ENCODE measurements at regions of chr2 and their contacts with region 1.

Region 1: GRCh38 chr2:25673300-25674076 is at the start of gene DTNB:
- DNase-seq: peak; percentile 73
- H3K4me3 Mint-ChIP-seq: peak within 1 kb of the TSS; percentile 81
- H3K27ac Mint-ChIP-seq: peak within 1 kb of the TSS; percentile 68
- H3K4me1 Mint-ChIP-seq: peaks cover 34% of the 10 kb centered on the region
- H3K27me3 Mint-ChIP-seq: peaks cover 18% of the 10 kb centered on the region
- total RNA-seq, gene DTNB: 32.1 and 33.9 TPM in 2 replicates

Region 2: DNA sequence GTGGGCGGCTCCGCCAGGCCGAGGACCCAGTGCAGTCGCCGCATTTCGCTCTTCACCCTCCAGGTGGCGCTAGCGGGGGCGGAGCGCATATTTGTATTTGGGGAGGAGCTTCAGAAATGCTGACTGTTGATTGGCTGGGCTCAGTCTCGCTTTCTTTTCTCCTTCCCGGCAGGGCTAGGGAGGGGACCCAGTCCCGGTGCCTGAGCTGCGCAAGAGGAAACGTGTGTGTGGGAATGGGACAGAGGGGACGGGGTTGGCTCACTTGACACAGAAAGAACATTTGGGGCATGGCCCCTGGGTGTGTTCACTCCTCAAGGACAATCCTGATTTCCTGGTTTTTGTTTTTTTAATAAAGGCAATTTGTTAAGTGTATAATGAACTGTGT is 311.4 kb before region 1 on chr2:
- intact Hi-C with region 1: loop called (anchors 5 kb)
- DNase-seq: peak; percentile 93
- H3K4me3 Mint-ChIP-seq: peak overlapping the region; percentile 81
- H3K27ac Mint-ChIP-seq: peak overlapping the region; percentile 92
- H3K4me1 Mint-ChIP-seq: peaks cover 8% of the 10 kb centered on the region
- H3K27me3 Mint-ChIP-seq: no peaks in the 10 kb centered on the region

Region 3: GRCh38 chr2:25586726-25587144 is 86.8 kb before region 1 on chr2:
- intact Hi-C with region 1: loop called (anchors 5 kb)
- DNase-seq: no peak
- H3K4me3 Mint-ChIP-seq: peak overlapping the region; percentile 67
- H3K27ac Mint-ChIP-seq: peak overlapping the region; percentile 96
- H3K4me1 Mint-ChIP-seq: peaks cover 28% of the 10 kb centered on the region
- H3K27me3 Mint-ChIP-seq: no peaks in the 10 kb centered on the region

Region 4: GRCh38 chr2:25700221-25700660 is 26.8 kb after region 1 on chr2:
- intact Hi-C with region 1: no loop called
- DNase-seq: no peak
- H3K4me3 Mint-ChIP-seq: no peak overlapping the region
- H3K27ac Mint-ChIP-seq: no peak overlapping the region
- H3K4me1 Mint-ChIP-seq: peaks cover 2% of the 10 kb centered on the region
- H3K27me3 Mint-ChIP-seq: no peaks in the 10 kb centered on the region

Region 5: GRCh38 chr2:25808006-25808383 is 134.5 kb after region 1 on chr2:
- intact Hi-C with region 1: loop called (anchors 10 kb)
- DNase-seq: no peak
- H3K4me3 Mint-ChIP-seq: no peak overlapping the region
- H3K27ac Mint-ChIP-seq: peak overlapping the region; percentile 21
- H3K4me1 Mint-ChIP-seq: peaks cover 60% of the 10 kb centered on the region
- H3K27me3 Mint-ChIP-seq: no peaks in the 10 kb centered on the region

Region 6: GRCh38 chr2:25867396-25868003 is 194.0 kb after region 1 on chr2:
- intact Hi-C with region 1: no loop called
- DNase-seq: no peak
- H3K4me3 Mint-ChIP-seq: no peak overlapping the region
- H3K27ac Mint-ChIP-seq: peak overlapping the region; percentile 17
- H3K4me1 Mint-ChIP-seq: peaks cover 8% of the 10 kb centered on the region
- H3K27me3 Mint-ChIP-seq: no peaks in the 10 kb centered on the region

Region 7: DNA sequence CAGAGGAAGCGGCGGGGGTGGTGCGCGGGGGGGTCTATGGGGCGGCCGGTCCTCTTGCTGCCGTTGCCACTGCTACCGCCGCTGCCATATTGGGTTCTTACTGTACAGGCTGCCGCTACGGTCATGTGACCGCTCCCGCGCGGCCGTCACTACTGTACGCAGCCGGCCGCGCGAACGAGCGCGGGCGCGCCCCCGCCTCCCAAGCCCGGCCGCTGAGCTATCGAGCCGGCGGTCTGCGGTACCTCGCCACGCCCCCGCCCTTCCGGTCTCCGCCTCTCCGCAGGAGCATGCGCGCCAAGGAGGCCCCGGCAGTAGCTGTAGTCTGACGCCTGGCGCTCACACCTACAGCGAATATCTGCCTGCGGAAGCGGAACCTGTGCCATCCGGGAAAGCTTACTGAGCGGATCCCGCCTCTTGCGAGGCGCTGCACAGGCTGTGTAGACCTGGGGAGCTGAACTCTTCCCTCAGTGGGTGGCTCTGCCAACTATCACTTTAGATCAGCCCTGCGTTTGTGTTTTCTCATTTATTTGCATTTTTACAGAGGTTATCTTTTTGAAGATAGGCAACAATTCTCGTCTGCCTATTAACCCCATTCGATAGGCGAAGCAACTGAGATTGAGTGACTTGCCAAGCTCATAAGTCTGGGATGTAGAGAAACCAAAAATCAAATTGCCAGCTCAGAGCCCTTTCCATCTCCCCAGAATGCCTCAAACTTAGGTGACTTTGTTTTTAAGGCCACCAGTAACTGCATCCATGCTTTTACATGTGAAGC is 205.1 kb after region 1 on chr2 and contains the start of gene ASXL2:
- intact Hi-C with region 1: loop called (anchors 5 kb)
- DNase-seq: peak; percentile 98
- H3K4me3 Mint-ChIP-seq: peak within 1 kb of the TSS; percentile 95
- H3K27ac Mint-ChIP-seq: peak within 1 kb of the TSS; percentile 95
- H3K4me1 Mint-ChIP-seq: peaks cover 43% of the 10 kb centered on the region
- H3K27me3 Mint-ChIP-seq: no peaks in the 10 kb centered on the region
- total RNA-seq, gene ASXL2: 76.7 and 80.7 TPM in 2 replicates